ENCODE measurements at regions of chr12 and their contacts with region 1.

Region 1: GRCh38 chr12:122182887-122183585 is at the start of gene LRRC43:
- DNase-seq: peak; percentile 36
- total RNA-seq, gene LRRC43: not detected in 2 replicates

Region 2: DNA sequence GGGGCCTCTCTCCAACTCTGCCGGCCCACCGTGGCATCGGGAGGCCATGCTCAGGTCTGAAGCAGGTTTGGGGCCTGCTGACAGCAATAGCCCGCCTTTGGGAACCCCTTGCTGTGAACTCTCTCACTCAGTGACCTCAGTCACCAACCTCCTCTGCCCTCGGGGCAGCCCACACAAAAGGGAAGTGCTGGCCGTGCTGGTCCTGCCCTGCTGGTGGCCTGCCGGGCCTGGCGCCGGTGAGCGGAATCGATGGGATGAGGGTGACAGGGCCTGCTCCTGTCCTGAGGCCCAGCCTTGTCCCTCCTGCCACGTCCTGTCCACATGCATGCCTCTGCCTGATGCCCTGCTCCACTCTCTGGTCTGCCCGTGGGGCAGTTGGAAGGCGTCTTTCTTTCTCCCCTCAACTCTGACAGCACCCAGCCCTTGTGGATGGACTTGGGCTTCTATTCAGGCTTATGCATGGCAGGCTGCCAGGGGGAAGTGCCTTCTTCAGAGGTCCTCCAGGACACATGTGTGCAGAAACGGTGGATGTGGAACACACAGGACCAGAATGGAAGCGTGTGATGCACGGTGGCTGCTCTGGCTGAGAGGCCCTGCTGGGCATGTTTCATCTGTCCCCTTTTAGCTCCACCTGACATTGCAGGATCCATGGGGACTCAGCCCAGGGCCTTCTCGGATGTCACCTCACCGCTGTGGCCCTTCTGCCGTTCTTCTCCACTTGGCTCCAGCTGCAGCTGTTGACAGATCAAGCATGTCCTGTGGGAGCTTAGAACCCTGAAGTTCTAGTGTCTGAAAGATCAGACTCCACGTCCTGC is 40.9 kb before region 1 on chr12:
- in situ Hi-C with region 1: loop called (anchors 5 kb)
- DNase-seq: no peak

Measured in G401 (cell line).